ENCODE measurements at regions of chr11 and their contacts with region 1.

Region 1: GRCh38 chr11:65477149-65477965 is 21.5 kb upstream of the MALAT1 start:
- DNase-seq: peak; percentile 96
- H3K4me3 Mint-ChIP-seq: peak overlapping the region; percentile 95
- H3K27ac Mint-ChIP-seq: peak overlapping the region; percentile 95
- H3K4me1 Mint-ChIP-seq: peaks cover 27% of the 10 kb centered on the region
- H3K27me3 Mint-ChIP-seq: no peaks in the 10 kb centered on the region

Region 2: GRCh38 chr11:64225612-64226506 is 1251.5 kb before region 1 on chr11 and contains the starts of genes NUDT22 and TRPT1:
- CTCF ChIA-PET with region 1: no interaction called
- intact Hi-C with region 1: no loop called
- DNase-seq: peak; percentile 94
- H3K4me3 Mint-ChIP-seq: peak within 1 kb of the TSS; percentile 87
- H3K27ac Mint-ChIP-seq: peak within 1 kb of the TSS; percentile 90
- H3K4me1 Mint-ChIP-seq: peaks cover 34% of the 10 kb centered on the region
- H3K27me3 Mint-ChIP-seq: no peaks in the 10 kb centered on the region
- total RNA-seq, gene NUDT22: 51.4 to 51.9 TPM
- total RNA-seq, gene TRPT1: 18.2 to 18.3 TPM

Region 3: GRCh38 chr11:65225279-65226102 is 251.9 kb before region 1 on chr11:
- CTCF ChIA-PET with region 1: no interaction called
- intact Hi-C with region 1: no loop called
- DNase-seq: peak; percentile 81
- H3K4me3 Mint-ChIP-seq: peak overlapping the region; percentile 74
- H3K27ac Mint-ChIP-seq: no peak overlapping the region
- H3K4me1 Mint-ChIP-seq: peaks cover 11% of the 10 kb centered on the region
- H3K27me3 Mint-ChIP-seq: peaks cover 18% of the 10 kb centered on the region

Region 4: DNA sequence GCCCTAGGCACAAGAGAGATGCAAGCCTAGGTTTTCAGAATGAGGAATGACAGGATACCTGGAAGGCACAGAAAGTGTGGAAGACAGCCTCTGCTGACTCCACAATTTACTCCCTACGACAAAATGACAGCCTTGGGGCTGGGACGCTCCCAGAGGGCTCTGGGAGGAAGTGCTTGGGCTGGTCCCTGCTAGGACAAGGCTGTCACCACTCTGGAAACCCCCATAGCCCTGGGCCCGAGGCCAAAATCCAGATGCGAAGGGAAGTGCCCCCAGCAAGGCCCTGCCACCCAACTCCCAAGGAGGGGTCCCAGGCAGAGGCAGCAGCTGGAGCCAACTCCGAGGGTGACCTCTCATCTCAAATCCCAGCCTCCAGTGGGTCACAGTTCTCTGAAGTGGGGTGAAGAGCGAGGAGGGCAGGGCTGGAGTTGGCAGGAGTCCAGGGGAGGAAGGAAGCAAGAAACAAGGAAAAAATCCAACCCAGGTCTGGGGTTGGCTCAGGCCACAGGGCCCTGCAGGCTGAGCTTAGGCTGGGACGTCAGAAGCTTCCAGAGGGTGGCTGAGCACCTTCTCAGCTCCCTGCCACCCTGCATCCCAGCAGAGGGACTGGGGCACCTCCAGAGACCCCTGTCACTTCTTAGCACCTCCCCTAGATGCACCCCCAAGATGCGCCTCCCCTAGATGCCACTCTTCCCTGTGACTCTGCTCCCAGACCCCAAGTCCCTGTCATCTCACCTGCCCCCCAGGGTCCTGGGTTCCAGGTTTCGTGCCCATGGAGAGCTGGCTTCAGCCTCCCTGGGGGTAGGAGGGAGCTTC is 168.9 kb before region 1 on chr11:
- CTCF ChIA-PET with region 1: no interaction called
- intact Hi-C with region 1: no loop called
- DNase-seq: no peak
- H3K4me3 Mint-ChIP-seq: no peak overlapping the region
- H3K27ac Mint-ChIP-seq: no peak overlapping the region
- H3K4me1 Mint-ChIP-seq: no peaks in the 10 kb centered on the region
- H3K27me3 Mint-ChIP-seq: no peaks in the 10 kb centered on the region

Region 5: GRCh38 chr11:65366340-65366773 is 111.0 kb before region 1 on chr11:
- CTCF ChIA-PET with region 1: no interaction called
- intact Hi-C with region 1: loop called (anchors 1 kb)
- DNase-seq: peak; percentile 46
- H3K4me3 Mint-ChIP-seq: no peak overlapping the region
- H3K27ac Mint-ChIP-seq: no peak overlapping the region
- H3K4me1 Mint-ChIP-seq: peaks cover 4% of the 10 kb centered on the region
- H3K27me3 Mint-ChIP-seq: no peaks in the 10 kb centered on the region

Region 6: GRCh38 chr11:65429724-65430405 is 47.5 kb before region 1 on chr11:
- CTCF ChIA-PET with region 1: interaction called, 4 read pairs
- intact Hi-C with region 1: loop called (anchors 1 kb)
- DNase-seq: peak; percentile 77
- H3K4me3 Mint-ChIP-seq: peak overlapping the region; percentile 100
- H3K27ac Mint-ChIP-seq: peak overlapping the region; percentile 99
- H3K4me1 Mint-ChIP-seq: peaks cover 76% of the 10 kb centered on the region
- H3K27me3 Mint-ChIP-seq: no peaks in the 10 kb centered on the region

Region 7: GRCh38 chr11:65487413-65488272 is 10.3 kb after region 1 on chr11:
- CTCF ChIA-PET with region 1: interaction called, 20 read pairs
- intact Hi-C with region 1: loop called (anchors 1 kb)
- DNase-seq: peak; percentile 83
- H3K4me3 Mint-ChIP-seq: peak overlapping the region; percentile 59
- H3K27ac Mint-ChIP-seq: peak overlapping the region; percentile 72
- H3K4me1 Mint-ChIP-seq: peaks cover 63% of the 10 kb centered on the region
- H3K27me3 Mint-ChIP-seq: no peaks in the 10 kb centered on the region

Region 8: GRCh38 chr11:65497141-65498041 is 20.0 kb after region 1 on chr11:
- CTCF ChIA-PET with region 1: interaction called, 24 read pairs
- intact Hi-C with region 1: loop called (anchors 1 kb)
- DNase-seq: peak; percentile 99
- H3K4me3 Mint-ChIP-seq: no peak overlapping the region
- H3K27ac Mint-ChIP-seq: no peak overlapping the region
- H3K4me1 Mint-ChIP-seq: peaks cover 37% of the 10 kb centered on the region
- H3K27me3 Mint-ChIP-seq: no peaks in the 10 kb centered on the region

Region 9: DNA sequence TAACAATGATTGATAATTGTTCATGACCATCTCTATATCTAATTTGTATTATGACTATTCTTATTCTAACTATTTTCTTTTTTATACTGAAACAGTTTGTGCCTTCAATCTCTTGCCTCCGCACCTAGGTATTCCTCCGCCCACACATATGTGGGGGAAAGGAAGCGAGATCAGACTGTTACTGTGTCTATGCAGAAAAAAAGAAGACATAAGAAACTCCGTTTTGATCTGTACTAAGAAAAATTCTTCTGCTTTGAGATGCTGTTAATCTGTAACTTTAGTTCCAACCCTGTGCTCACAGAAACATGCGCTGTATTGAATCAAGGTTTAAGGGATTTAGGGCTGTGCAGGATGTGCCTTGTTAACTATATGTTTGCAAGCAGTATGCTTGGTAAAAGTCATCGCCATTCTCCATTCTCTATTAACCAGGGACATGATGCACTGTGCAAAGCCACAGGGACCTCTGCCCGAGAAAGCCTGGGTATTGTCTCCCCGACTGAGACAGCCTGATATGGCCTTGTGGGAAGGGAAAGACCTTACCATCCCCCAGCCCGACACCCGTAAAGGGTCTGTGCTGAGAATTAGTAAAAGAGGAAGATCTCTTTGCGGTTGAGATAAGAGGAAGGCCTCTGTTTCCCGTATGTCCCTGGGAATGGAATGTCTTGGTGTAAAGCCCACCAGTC is 45.4 kb after region 1 on chr11:
- CTCF ChIA-PET with region 1: no interaction called
- intact Hi-C with region 1: no loop called
- DNase-seq: peak; percentile 51
- H3K4me3 Mint-ChIP-seq: peak overlapping the region; percentile 65
- H3K27ac Mint-ChIP-seq: peak overlapping the region; percentile 77
- H3K4me1 Mint-ChIP-seq: peaks cover 48% of the 10 kb centered on the region
- H3K27me3 Mint-ChIP-seq: no peaks in the 10 kb centered on the region

Measured in activated naive CD4-positive, alpha-beta T cell treated with anti-CD3 and anti-CD28 coated beads for 36 hours (primary cell).